ENCODE measurements at regions of chr6 and their contacts with region 1.

Region 1: DNA sequence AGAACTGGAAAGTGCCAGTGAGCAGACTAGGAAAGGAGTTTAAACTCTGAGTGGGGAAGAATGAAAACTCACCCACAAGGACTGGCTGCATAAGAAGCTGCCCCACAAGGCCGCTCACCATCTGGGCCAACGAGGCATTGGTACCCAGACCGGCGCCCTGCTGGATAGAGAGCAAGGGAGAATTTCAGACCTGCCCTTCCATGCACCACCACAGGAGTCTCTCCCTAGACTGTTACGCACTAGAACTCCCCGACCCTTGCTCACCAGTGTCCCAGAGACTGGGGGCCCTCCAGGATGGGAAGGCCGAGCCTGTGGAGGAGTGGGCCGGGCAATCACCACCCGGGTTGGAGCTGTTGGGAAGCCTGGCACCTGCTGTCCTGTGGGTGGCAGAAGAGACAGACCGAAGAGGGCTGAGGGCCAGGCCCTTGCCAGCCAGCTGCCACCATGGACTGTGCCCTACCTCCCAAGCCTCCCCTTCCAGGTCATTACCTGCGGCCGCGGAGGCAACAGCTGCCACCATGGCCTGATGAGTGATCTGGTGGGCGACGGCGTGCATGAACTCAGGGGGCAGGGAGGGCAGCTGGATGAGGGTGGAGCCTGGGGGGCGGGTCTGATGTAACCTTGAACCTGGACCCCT is 8.5 kb downstream of the BAG6 start:
- DNase-seq: no peak
- ATAC-seq: peak in 1 of 4 donors; percentile 4
- H3K4me3 ChIP-seq: no peak overlapping the region
- H3K27ac ChIP-seq: no peak overlapping the region
- H3K4me1 ChIP-seq: no peaks in the 10 kb centered on the region
- H3K27me3 ChIP-seq: no peaks in the 10 kb centered on the region
- CTCF ChIP-seq: no peak
- POLR2A ChIP-seq: no peak

Region 2: DNA sequence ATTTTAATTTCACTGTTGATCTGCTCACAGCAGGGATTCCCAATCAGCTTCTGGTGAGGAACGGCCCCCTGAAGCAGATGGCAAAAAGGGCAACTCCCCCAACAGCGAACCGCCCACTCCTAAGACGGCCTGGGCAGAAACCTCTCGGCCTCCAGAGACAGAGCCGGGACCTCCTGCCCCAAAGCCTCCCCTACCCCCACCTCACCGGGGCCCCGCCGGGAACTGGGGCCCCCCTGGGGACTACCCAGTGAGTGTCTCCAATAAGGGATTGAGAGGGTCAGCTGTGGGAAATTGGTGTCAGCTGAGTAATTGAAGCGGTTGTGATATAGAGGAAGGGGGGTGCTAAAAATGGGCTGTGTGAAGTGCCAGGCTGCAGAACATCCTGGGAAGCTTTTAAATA is 17.0 kb before region 1 on chr6:
- intact Hi-C with region 1: loop called in 1 of 10 experiments (anchors 2 kb)
- DNase-seq: no peak
- ATAC-seq: no peak
- H3K4me3 ChIP-seq: no peak overlapping the region
- H3K27ac ChIP-seq: no peak overlapping the region
- H3K4me1 ChIP-seq: peaks cover 0 to 12% (median 8%) of the 10 kb centered on the region in 12 donors
- H3K27me3 ChIP-seq: no peaks in the 10 kb centered on the region
- CTCF ChIP-seq: no peak
- POLR2A ChIP-seq: no peak

Region 3: GRCh38 chr6:31851485-31851832 is 207.5 kb after region 1 on chr6:
- intact Hi-C with region 1: no loop called
- DNase-seq: no peak
- ATAC-seq: no peak
- H3K4me3 ChIP-seq: no peak overlapping the region
- H3K27ac ChIP-seq: no peak overlapping the region
- H3K4me1 ChIP-seq: no peaks in the 10 kb centered on the region
- H3K27me3 ChIP-seq: no peaks in the 10 kb centered on the region
- CTCF ChIP-seq: no peak
- POLR2A ChIP-seq: no peak